CD4-positive, alpha-beta T cell (primary cell): ENCODE measurements at regions of chr17 and their contacts with region 1.

Region 1: GRCh38 chr17:63096426-63096825 is 130.4 kb downstream of the TANC2 start:
- DNase-seq: no peak
- ATAC-seq: no peak
- H3K4me3 ChIP-seq: no peak overlapping the region
- H3K4me3 Mint-ChIP-seq: no peak overlapping the region
- H3K27ac ChIP-seq: no peak overlapping the region
- H3K27ac Mint-ChIP-seq: no peak overlapping the region
- H3K4me1 ChIP-seq: no peaks in the 10 kb centered on the region
- H3K4me1 Mint-ChIP-seq: no peaks in the 10 kb centered on the region
- H3K27me3 ChIP-seq: no peaks in the 10 kb centered on the region
- H3K27me3 Mint-ChIP-seq: no peaks in the 10 kb centered on the region
- CTCF ChIP-seq: no peak

Region 2: DNA sequence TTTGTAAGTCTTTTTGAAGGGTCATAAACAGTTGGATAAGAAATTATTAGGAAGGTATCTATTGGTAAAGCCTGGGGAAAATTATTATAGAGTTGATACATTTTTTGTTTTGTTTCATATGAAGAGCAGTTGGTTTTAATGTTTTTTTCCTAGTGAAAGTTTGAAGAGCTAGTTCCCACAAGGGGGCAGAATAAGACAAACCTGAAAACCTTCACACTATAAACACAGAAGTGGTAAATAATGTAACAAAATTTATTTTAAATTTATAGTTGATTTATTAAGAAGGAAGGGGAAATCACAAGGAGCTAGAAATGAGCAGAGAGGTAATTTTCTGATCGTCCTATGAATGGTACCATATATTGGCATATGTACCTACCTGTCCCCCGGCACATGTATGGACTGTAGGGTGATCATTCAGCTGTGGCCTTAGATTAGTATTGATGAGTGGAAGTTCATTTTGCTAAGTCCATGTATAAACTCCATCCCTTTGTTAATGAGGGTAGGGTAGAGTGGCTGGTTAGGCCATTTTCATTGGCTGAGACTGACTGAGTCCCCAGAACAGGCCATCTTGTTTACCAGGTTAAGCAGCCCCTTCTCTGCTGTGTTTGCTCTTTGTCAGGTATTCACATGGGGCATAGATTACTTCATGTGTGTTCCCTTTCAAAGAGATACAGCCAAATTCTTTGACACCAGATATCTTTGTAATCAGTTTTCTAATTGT is 14.0 kb before region 1 on chr17:
- CTCF ChIA-PET with region 1: no interaction called
- POLR2A ChIA-PET with region 1: no interaction called
- intact Hi-C with region 1: loop called in 1 of 2 experiments (anchors 1 kb)
- DNase-seq: no peak
- ATAC-seq: no peak
- H3K4me3 ChIP-seq: no peak overlapping the region
- H3K4me3 Mint-ChIP-seq: no peak overlapping the region
- H3K27ac ChIP-seq: no peak overlapping the region
- H3K27ac Mint-ChIP-seq: no peak overlapping the region
- H3K4me1 ChIP-seq: no peaks in the 10 kb centered on the region
- H3K4me1 Mint-ChIP-seq: no peaks in the 10 kb centered on the region
- H3K27me3 ChIP-seq: no peaks in the 10 kb centered on the region
- H3K27me3 Mint-ChIP-seq: no peaks in the 10 kb centered on the region
- CTCF ChIP-seq: no peak